ENCODE measurements at regions of chr4 and their contacts with region 1.

Region 1: GRCh38 chr4:138062929-138063328 is 179.2 kb downstream of the SLC7A11 start:
- DNase-seq: peak; percentile 79
- ATAC-seq: peak; percentile 81
- H3K4me3 ChIP-seq: no peak overlapping the region
- H3K27ac ChIP-seq: no peak overlapping the region
- H3K4me1 ChIP-seq: no peaks in the 10 kb centered on the region; the same call in 1 of the 2 replicates
- H3K27me3 ChIP-seq: no peaks in the 10 kb centered on the region
- CTCF ChIP-seq: peak; percentile 46
- POLR2A ChIP-seq: no peak
- RAD21 ChIP-seq: peak; percentile 53

Region 2: DNA sequence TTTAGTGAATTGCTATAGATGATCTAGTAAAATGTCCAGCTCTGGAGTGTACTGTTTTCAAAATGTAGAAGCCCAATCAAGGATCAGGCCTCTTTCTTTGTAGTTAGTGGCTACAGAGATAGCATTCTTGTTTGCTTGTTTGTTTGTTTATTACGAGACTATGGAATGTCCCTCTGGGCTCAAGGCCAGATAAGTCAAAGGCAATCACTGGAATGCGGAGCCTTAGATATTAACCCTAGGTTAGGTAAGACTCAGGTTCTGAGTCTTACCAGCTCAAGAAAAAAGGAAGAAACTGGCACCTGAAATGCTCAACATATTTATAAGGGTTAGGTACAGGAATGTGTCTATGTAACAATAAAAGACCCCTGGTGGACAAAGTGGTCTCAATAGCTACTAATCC is 82.3 kb before region 1 on chr4:
- CTCF ChIA-PET with region 1: no interaction called
- POLR2A ChIA-PET with region 1: no interaction called
- dilution Hi-C with region 1: no loop called
- in situ Hi-C with region 1: no loop called
- intact Hi-C with region 1: no loop called
- DNase-seq: no peak
- ATAC-seq: no peak
- H3K4me3 ChIP-seq: no peak overlapping the region
- H3K27ac ChIP-seq: no peak overlapping the region
- H3K4me1 ChIP-seq: no peaks in the 10 kb centered on the region
- H3K27me3 ChIP-seq: no peaks in the 10 kb centered on the region
- CTCF ChIP-seq: no peak
- POLR2A ChIP-seq: no peak
- RAD21 ChIP-seq: no peak

Region 3: GRCh38 chr4:138199568-138200235 is 136.8 kb after region 1 on chr4:
- CTCF ChIA-PET with region 1: no interaction called
- POLR2A ChIA-PET with region 1: no interaction called
- dilution Hi-C with region 1: no loop called
- in situ Hi-C with region 1: no loop called
- intact Hi-C with region 1: no loop called
- DNase-seq: peak; percentile 33
- ATAC-seq: no peak
- H3K4me3 ChIP-seq: no peak overlapping the region
- H3K27ac ChIP-seq: no peak overlapping the region
- H3K4me1 ChIP-seq: peaks cover 4% of the 10 kb centered on the region; the same call in 1 of the 2 replicates
- H3K27me3 ChIP-seq: no peaks in the 10 kb centered on the region
- CTCF ChIP-seq: no peak
- POLR2A ChIP-seq: no peak
- RAD21 ChIP-seq: no peak

Region 4: GRCh38 chr4:138255917-138256597 is 193.1 kb after region 1 on chr4:
- CTCF ChIA-PET with region 1: no interaction called
- POLR2A ChIA-PET with region 1: no interaction called
- dilution Hi-C with region 1: no loop called
- in situ Hi-C with region 1: no loop called
- intact Hi-C with region 1: no loop called
- DNase-seq: no peak
- ATAC-seq: no peak
- H3K4me3 ChIP-seq: no peak overlapping the region
- H3K27ac ChIP-seq: no peak overlapping the region
- H3K4me1 ChIP-seq: no peaks in the 10 kb centered on the region; the same call in 1 of the 2 replicates
- H3K27me3 ChIP-seq: no peaks in the 10 kb centered on the region
- CTCF ChIP-seq: no peak
- POLR2A ChIP-seq: no peak
- RAD21 ChIP-seq: no peak

Region 5: GRCh38 chr4:138852681-138853080 is 789.8 kb after region 1 on chr4:
- CTCF ChIA-PET with region 1: no interaction called
- POLR2A ChIA-PET with region 1: interaction called, 10 read pairs
- dilution Hi-C with region 1: no loop called
- in situ Hi-C with region 1: no loop called
- intact Hi-C with region 1: no loop called
- DNase-seq: no peak
- ATAC-seq: no peak
- H3K4me3 ChIP-seq: no peak overlapping the region
- H3K27ac ChIP-seq: no peak overlapping the region
- H3K4me1 ChIP-seq: peaks cover 3% of the 10 kb centered on the region; the same call in 1 of the 2 replicates
- H3K27me3 ChIP-seq: peaks cover 6% of the 10 kb centered on the region
- CTCF ChIP-seq: no peak
- POLR2A ChIP-seq: no peak
- RAD21 ChIP-seq: no peak